Mammary epithelial cell (primary cell): ENCODE measurements at regions of chr7 and their contacts with region 1.

Region 1: GRCh38 chr7:79308192-79308591 is 145.3 kb downstream of the MAGI2 start:
- DNase-seq: peak; percentile 40
- H3K4me3 ChIP-seq: no peak overlapping the region
- H3K27ac ChIP-seq: no peak overlapping the region
- H3K4me1 ChIP-seq: peaks cover 5% of the 10 kb centered on the region
- H3K27me3 ChIP-seq: no peaks in the 10 kb centered on the region
- CTCF ChIP-seq: peak; percentile 21 to 57

Region 2: DNA sequence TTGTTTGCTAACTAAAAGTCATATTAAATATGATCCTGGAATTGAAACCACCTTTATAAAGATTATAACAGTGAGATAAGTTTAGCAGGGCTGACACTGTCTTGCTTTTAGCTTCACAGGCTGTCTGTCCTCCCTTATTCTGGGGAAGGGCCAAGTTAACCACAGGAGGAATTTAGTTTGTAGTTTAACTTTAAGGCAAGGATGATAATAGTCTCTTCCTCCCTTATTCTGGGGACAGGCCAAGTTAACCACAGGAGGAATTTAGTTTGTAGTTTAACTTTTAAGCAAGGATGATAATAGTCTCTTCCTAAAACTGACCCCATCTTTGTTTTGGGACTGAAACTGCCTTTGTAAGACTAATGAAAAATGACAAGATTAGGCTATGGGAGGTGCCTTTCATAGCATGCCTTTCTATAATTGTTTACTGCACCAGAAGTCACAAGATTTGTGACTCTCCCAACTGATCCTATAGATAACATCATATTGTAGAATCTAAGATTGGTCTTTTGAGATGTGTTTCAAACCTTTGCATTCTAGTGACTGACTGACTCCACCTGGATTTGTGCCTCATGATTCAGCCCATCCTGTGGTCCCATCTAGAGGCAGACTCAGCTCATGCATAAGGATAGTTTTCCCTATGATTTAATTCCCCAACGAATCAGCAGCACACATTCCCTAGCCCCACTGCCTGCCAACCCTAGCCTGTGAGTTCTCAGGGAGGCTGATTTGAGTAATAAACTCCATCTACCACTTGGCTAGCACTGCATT is 66.7 kb before region 1 on chr7:
- CTCF ChIA-PET with region 1: interaction called, 15 read pairs
- dilution Hi-C with region 1: no loop called
- in situ Hi-C with region 1: no loop called
- intact Hi-C with region 1: no loop called
- DNase-seq: peak; percentile 23
- H3K4me3 ChIP-seq: no peak overlapping the region
- H3K27ac ChIP-seq: no peak overlapping the region
- H3K4me1 ChIP-seq: no peaks in the 10 kb centered on the region
- H3K27me3 ChIP-seq: no peaks in the 10 kb centered on the region
- CTCF ChIP-seq: peak; percentile 6 to 19

Region 3: DNA sequence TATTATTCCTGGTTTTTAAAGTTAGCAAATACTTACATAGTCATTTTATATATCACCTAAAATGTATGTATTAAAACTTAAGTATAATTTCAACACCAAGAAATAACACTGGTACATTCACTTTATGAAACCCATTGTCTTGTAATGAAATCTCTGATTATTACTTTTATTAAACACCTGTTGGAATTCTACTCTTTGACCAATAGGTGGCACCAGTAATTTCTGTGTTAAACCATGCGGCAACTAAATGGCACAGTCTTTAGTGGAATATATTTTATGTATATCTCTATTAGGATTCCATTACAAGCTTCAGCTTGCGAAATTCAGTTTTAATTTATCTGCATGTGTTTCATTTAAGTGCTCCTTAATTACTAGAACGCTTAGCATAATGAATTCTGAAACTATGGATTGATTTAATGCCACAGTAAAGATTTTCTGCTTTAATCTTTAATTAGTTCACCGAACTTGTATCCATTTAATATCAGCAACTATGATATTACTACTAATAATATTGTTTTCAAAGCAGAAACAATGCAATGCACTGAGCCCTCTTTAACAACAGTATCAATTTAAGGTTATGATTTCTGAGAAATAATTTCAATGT is 36.0 kb before region 1 on chr7:
- CTCF ChIA-PET with region 1: no interaction called
- dilution Hi-C with region 1: no loop called
- in situ Hi-C with region 1: no loop called
- intact Hi-C with region 1: loop called (anchors 5 kb)
- DNase-seq: no peak
- H3K4me3 ChIP-seq: no peak overlapping the region
- H3K27ac ChIP-seq: no peak overlapping the region
- H3K4me1 ChIP-seq: peaks cover 2% of the 10 kb centered on the region
- H3K27me3 ChIP-seq: no peaks in the 10 kb centered on the region
- CTCF ChIP-seq: peak; percentile 63 to 70